ENCODE measurements at regions of chr16 and their contacts with region 1.

Region 1: DNA sequence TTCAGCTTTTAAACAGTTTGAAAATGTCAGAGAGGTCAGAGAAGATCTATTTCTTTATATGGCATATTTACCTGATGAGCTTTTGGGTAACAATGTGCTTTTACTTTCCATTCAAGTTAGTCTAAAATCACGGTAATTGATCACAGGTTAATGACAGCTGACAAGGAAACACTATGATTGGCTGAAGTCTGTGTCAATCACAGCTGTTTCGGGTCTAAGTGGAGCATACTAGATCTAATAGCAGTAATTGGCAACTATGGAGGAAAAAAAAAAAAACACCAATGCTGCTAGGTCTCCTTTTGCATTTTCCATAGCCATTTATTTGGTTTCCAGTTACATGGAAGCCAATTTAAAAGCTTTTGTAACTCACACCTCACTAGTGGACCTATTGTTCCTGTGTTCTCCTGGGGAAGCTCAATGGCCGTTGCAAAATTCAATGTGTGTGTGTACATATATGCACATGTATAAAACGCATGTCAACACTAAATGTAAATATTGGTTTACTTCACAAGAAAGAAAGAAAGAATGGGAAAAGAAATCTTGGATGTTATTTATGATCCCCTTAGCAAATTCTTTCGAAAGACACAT is 568.3 kb upstream of the ZFHX3 start:
- DNase-seq: no peak
- H3K4me3 ChIP-seq: no peak overlapping the region
- H3K27ac ChIP-seq: no peak overlapping the region
- H3K4me1 ChIP-seq: no peaks in the 10 kb centered on the region
- H3K27me3 ChIP-seq: no peaks in the 10 kb centered on the region
- CTCF ChIP-seq: no peak

Region 2: DNA sequence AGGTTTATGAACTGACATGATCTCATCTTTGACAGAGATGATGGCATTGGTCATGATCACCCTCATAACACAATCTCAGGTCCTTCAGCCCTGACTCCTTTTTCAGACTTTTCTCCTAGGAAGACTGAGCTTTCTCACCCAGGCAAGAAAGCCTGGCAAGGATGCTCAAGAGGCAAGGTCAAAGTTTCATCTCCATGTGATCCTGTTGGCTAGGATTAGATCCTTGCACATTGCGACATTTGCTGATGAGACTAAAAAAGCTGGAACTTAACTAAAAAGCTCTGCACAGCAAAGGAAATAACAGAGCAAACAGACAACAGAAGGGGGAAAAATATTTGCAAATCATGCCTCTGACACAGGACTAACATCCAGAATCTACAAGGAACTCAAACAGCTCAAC is 236.3 kb after region 1 on chr16:
- CTCF ChIA-PET with region 1: no interaction called
- dilution Hi-C with region 1: loop called (anchors 10 kb)
- in situ Hi-C with region 1: no loop called
- intact Hi-C with region 1: no loop called
- DNase-seq: no peak
- H3K4me3 ChIP-seq: no peak overlapping the region
- H3K27ac ChIP-seq: no peak overlapping the region
- H3K4me1 ChIP-seq: no peaks in the 10 kb centered on the region
- H3K27me3 ChIP-seq: no peaks in the 10 kb centered on the region
- CTCF ChIP-seq: no peak

Measured in mammary epithelial cell (primary cell).